ENCODE measurements at regions of chr19 and their contacts with region 1.

Region 1: DNA sequence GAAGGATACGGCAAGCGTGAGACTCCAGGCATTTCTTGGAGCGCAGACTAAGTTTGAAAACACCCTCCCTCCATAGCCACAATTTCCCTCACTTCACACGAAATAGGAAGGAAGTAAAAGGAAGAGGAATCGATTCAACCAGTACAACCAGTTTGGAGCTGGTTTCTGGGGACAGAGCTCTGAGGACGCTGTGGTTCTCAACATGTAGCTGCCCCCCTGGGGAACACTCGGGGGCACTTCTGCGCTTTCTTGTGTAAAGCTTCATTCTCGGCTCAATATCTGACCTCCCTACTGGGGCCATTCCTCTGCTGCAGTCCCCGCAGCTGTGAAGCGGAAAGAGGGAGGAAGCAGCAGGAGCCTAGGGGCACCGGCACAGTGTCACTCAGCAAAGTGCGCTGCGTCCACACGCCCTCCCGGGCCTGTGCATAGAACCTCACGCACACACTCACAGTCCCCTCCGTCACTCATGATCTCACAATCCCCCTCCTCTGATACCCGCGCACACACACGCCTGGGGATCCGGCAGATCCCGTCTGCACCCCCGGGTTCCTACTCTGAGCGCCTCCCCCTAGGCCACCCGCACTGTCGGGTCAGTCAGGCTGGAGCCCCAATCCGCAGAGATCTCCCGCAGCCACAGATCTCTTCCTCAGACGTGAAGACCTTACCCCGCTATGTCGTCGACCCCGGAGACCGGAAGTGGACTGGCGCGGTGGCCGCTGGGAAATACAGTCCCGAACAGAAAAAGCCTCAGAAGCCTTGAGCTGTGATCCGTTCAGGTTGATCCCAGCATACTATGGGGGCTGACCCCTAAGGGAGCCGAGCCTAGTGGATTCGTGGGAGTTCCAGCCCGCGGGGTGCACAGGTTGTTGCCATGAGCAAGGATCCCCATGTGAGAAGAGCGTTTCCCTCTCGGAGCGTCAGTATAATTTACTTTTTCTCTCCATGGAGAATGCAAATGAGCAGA is at the start of gene ZNF780A:
- DNase-seq: peak; percentile 74 to 85 (median 78)
- H3K4me3 ChIP-seq: peak within 1 kb of the TSS; percentile 66 to 83
- H3K4me3 Mint-ChIP-seq: peak within 1 kb of the TSS; percentile 98 to 100 (median 100)
- H3K27ac ChIP-seq: peak within 1 kb of the TSS; percentile 88
- H3K27ac Mint-ChIP-seq: peak within 1 kb of the TSS; percentile 99 to 100 (median 100)
- H3K4me1 ChIP-seq: peaks cover 34% of the 10 kb centered on the region
- H3K4me1 Mint-ChIP-seq: peaks cover 29 to 50% (median 39%) of the 10 kb centered on the region in 4 donors
- H3K27me3 ChIP-seq: peaks cover 3% of the 10 kb centered on the region
- H3K27me3 Mint-ChIP-seq: peaks cover 3% of the 10 kb centered on the region in 2 donors
- total RNA-seq, gene ZNF780A: 43.5 to 46.5 TPM

Region 2: DNA sequence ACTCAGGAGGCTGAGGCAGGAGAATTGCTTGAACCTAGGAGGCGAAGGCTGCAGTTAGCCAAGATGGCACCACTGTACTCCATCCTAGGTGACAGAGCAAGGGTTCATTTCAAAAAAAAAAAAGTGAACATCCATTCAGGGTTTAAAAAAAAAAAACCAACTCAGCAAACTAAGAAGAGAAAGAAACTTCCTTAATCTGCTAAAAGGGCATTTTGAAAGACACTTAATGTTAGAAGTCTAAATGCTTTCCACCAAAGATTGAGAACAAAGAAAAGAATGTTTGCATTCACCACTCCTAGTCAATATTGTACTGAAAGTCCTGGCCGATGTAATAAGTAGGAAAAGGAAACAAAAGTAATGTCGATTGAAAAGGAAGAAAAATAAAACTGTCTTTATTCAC is 126.6 kb before region 1 on chr19:
- CTCF ChIA-PET with region 1: no interaction called
- POLR2A ChIA-PET with region 1: no interaction called
- intact Hi-C with region 1: no loop called
- DNase-seq: no peak
- H3K4me3 ChIP-seq: no peak overlapping the region
- H3K4me3 Mint-ChIP-seq: peak overlapping the region in 1 of 8 donors; percentile 29
- H3K27ac ChIP-seq: no peak overlapping the region
- H3K27ac Mint-ChIP-seq: peak overlapping the region in 3 of 7 donors; percentile 1 to 74 (median 6)
- H3K4me1 ChIP-seq: peaks cover 34% of the 10 kb centered on the region
- H3K4me1 Mint-ChIP-seq: peaks cover 31 to 48% (median 38%) of the 10 kb centered on the region in 4 donors
- H3K27me3 ChIP-seq: no peaks in the 10 kb centered on the region
- H3K27me3 Mint-ChIP-seq: no peaks in the 10 kb centered on the region

Region 3: DNA sequence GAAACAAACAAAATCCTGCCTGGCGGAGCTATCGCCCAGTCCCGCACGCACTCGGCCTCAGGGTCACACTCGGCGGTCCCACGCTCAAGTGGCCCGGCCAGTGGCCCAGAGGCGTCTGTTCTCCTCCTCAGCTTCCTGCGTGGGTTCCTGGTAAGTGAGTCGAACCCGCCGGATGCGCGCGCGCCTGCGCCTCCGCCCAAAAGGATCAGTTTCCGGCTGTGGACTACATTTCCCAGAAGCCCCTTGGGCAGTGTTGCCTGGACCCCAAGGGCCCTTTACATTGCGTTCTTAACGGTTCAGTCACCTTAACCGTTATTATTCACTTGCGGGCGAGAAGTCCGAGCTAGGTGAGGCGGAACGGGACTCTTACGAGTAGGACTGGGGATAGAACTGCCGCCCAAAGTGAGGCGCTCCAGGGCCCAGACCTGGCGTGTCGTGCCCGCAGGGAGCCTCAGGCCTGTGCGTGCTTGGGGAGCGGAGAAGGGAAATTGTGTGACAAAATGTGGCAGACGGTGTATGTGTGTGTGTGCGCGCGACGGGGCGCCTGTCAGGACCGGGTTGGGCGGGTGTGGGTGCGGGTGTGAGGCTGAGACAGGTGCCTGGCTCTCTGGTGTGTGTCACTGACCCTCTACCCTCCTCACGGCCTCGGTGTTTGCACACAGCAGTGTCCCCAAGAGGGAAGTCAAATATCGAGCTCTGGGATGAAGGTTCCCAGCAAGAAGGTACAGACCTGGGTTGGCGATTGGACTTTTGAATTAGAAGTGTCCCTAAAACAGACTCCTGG is 93.5 kb before region 1 on chr19 and contains the start of gene ZNF546:
- CTCF ChIA-PET with region 1: no interaction called
- POLR2A ChIA-PET with region 1: interaction called, 12 read pairs
- intact Hi-C with region 1: loop called (anchors 1 kb)
- DNase-seq: peak; percentile 87 to 93 (median 90)
- H3K4me3 ChIP-seq: peak within 1 kb of the TSS; percentile 98 to 99
- H3K4me3 Mint-ChIP-seq: peak within 1 kb of the TSS; percentile 93 to 100 (median 99)
- H3K27ac ChIP-seq: peak within 1 kb of the TSS; percentile 82
- H3K27ac Mint-ChIP-seq: peak within 1 kb of the TSS; percentile 79 to 98 (median 96)
- H3K4me1 ChIP-seq: peaks cover 19% of the 10 kb centered on the region
- H3K4me1 Mint-ChIP-seq: peaks cover 27 to 53% (median 37%) of the 10 kb centered on the region in 4 donors
- H3K27me3 ChIP-seq: no peaks in the 10 kb centered on the region
- H3K27me3 Mint-ChIP-seq: no peaks in the 10 kb centered on the region
- total RNA-seq, gene ZNF546: 17.5 to 18.4 TPM

Region 4: GRCh38 chr19:40055832-40056504 is 34.6 kb before region 1 on chr19 and contains the start of gene ZNF780B:
- CTCF ChIA-PET with region 1: no interaction called
- POLR2A ChIA-PET with region 1: interaction called, 21 read pairs
- intact Hi-C with region 1: loop called (anchors 2 kb)
- DNase-seq: peak; percentile 67 to 82 (median 72)
- H3K4me3 ChIP-seq: peak within 1 kb of the TSS; percentile 77
- H3K4me3 Mint-ChIP-seq: peak within 1 kb of the TSS; percentile 98 to 100 (median 99)
- H3K27ac ChIP-seq: peak within 1 kb of the TSS; percentile 72
- H3K27ac Mint-ChIP-seq: peak within 1 kb of the TSS; percentile 90 to 99 (median 97)
- H3K4me1 ChIP-seq: peaks cover 39% of the 10 kb centered on the region
- H3K4me1 Mint-ChIP-seq: peaks cover 38 to 51% (median 46%) of the 10 kb centered on the region in 4 donors
- H3K27me3 ChIP-seq: no peaks in the 10 kb centered on the region
- H3K27me3 Mint-ChIP-seq: peaks cover 0 to 4% of the 10 kb centered on the region in 2 donors
- total RNA-seq, gene ZNF780B: 63.3 to 66.2 TPM

Region 5: DNA sequence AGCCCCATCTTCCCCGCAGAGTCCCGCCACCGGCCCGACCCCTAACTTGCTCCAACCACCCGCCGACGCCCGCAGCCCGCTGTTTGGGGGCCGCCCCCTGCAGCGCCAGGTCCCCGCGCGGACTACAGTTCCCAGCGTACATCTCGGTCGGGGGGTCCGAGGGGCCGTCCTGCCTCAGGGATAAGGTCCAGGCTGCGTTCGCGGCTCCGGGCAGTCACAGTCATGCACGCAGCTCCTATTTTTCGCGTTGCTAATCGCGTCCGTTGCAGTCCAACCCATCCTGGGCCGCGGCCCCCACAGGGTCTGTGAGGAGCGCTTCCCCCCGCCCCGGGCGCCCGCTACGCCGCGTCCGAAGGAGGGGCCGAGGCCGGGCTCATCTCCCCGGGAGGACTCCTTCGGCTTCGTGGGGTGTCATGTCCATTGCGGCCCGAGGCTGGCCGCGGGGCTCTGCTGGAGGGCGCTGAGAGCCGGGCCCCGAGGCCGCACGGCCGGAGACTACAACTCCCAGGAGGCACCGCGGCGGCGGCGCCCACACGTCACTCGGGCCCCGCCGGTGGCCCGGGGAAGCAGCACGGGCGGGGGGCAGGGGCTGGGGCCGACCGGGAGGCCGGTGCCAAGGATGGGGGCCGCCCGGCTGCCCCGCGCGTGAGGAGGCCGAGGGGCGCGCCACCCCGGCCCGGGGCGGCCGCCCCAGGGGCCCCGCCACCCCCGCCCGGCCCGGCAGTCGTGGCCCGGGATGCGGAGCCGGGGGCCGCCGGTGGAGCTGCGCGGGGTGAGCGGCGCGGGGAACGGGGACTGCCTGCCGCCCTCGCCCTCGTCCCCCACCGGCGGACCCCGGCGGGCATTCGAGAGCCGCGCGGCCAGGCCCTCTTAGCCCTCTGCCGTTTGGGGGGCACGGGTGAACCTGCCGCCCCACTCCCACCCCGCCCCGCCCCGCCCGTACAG is 100.6 kb after region 1 on chr19 and contains the start of gene MAP3K10:
- CTCF ChIA-PET with region 1: no interaction called
- POLR2A ChIA-PET with region 1: interaction called, 10 read pairs
- intact Hi-C with region 1: no loop called
- DNase-seq: peak; percentile 67 to 77 (median 70)
- H3K4me3 ChIP-seq: peak within 1 kb of the TSS; percentile 66 to 95
- H3K4me3 Mint-ChIP-seq: peak within 1 kb of the TSS; percentile 87 to 94 (median 91)
- H3K27ac ChIP-seq: peak within 1 kb of the TSS; percentile 96
- H3K27ac Mint-ChIP-seq: peak within 1 kb of the TSS; percentile 92 to 98 (median 96)
- H3K4me1 ChIP-seq: peaks cover 19% of the 10 kb centered on the region
- H3K4me1 Mint-ChIP-seq: peaks cover 22 to 40% (median 29%) of the 10 kb centered on the region in 4 donors
- H3K27me3 ChIP-seq: no peaks in the 10 kb centered on the region
- H3K27me3 Mint-ChIP-seq: no peaks in the 10 kb centered on the region
- total RNA-seq, gene MAP3K10: 28.4 to 30.2 TPM

Region 6: DNA sequence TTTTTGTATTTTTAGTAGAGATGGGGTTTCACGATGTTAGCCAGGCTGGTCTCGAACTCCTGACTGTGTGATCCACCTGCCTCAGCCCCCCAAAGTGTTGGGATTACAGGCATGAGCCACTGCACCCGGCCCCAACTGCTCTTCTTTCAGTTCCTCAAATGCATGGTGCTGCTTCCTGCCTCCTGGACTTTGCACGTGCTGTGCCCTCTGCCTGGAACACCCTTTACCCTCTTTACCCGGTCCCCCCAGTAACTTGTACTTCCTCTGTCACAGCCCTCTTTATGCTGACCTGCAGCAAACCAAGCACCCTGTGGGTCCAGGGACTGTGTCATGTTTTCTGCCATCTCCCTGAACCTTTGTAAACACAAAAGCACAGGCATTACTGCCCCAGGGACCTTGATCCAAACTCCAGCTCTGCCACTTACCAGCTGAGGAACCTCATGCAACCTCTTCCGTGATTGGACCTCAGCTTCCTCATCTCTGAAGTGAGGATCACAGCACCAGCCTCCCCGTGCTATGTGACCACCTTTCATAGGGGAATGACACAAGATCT is 371.2 kb after region 1 on chr19:
- CTCF ChIA-PET with region 1: no interaction called
- POLR2A ChIA-PET with region 1: no interaction called
- intact Hi-C with region 1: no loop called
- DNase-seq: no peak
- H3K4me3 ChIP-seq: no peak overlapping the region
- H3K4me3 Mint-ChIP-seq: no peak overlapping the region
- H3K27ac ChIP-seq: no peak overlapping the region
- H3K27ac Mint-ChIP-seq: peak overlapping the region in 1 of 7 donors; percentile 30
- H3K4me1 ChIP-seq: peaks cover 20% of the 10 kb centered on the region
- H3K4me1 Mint-ChIP-seq: peaks cover 22 to 30% (median 24%) of the 10 kb centered on the region in 4 donors
- H3K27me3 ChIP-seq: no peaks in the 10 kb centered on the region
- H3K27me3 Mint-ChIP-seq: peaks cover 6 to 7% of the 10 kb centered on the region in 2 donors